ENCODE measurements at regions of chr5 and their contacts with region 1.

Region 1: GRCh38 chr5:134533115-134533815 is 7.8 kb downstream of the JADE2 start:
- DNase-seq: peak; percentile 86
- ATAC-seq: peak; percentile 91

Region 2: GRCh38 chr5:132813599-132814502 is 1719.4 kb before region 1 on chr5:
- intact Hi-C with region 1: no loop called
- DNase-seq: no peak
- ATAC-seq: peak; percentile 35

Region 3: GRCh38 chr5:134411546-134412266 is 121.6 kb before region 1 on chr5 and contains the start of gene CDKN2AIPNL:
- intact Hi-C with region 1: loop called (anchors 10 kb)
- DNase-seq: peak; percentile 94
- ATAC-seq: peak; percentile 99
- total RNA-seq, gene CDKN2AIPNL: 12.4 TPM